HAP-1 (cell line): ENCODE measurements at regions of chr12 and their contacts with region 1.

Region 1: GRCh38 chr12:92570056-92570753 is 132.6 kb upstream of the PLEKHG7 start:
- DNase-seq: peak; percentile 80
- H3K4me3 ChIP-seq: no peak overlapping the region
- H3K4me1 ChIP-seq: no peaks in the 10 kb centered on the region
- H3K27me3 ChIP-seq: peaks cover 6% of the 10 kb centered on the region; the same call in 1 of the 2 replicates

Region 2: GRCh38 chr12:91382081-91382543 is 1188.1 kb before region 1 on chr12:
- in situ Hi-C with region 1: loop called (anchors 25 kb)
- DNase-seq: peak; percentile 88 to 91
- H3K4me3 ChIP-seq: peak overlapping the region; percentile 11
- H3K4me1 ChIP-seq: peaks cover 12% of the 10 kb centered on the region
- H3K27me3 ChIP-seq: no peaks in the 10 kb centered on the region

Region 3: DNA sequence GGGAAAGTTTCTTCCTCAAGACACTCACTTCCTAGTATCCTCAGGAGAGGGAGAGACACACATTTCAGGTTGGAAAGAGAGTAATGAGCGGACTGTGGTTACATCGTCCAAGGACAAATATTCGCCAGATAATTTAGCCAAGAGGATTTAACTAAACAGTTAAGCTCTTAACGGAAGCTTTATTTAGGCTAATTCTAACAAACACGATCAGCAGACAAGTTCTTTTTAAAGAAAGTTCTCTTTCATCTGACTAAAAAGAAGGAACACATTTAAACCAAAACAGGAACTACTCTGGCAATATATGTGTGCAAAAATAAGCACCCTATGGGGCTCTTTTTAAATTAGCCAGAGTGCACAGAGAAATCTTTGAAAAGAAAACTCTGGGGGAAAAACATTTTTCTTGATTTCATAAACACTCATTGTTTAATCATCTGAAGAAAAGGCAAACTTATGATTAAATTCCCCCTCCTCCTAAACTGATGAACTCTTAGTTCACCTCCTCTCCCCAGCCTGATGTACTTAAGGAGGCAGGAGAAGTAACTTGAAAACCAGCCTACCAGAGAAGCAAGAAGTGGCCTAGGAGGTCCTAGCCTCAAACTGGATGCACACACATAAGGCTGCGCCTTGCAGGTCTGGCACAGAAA is 411.3 kb before region 1 on chr12:
- in situ Hi-C with region 1: no loop called
- DNase-seq: no peak
- H3K4me3 ChIP-seq: no peak overlapping the region
- H3K4me1 ChIP-seq: no peaks in the 10 kb centered on the region
- H3K27me3 ChIP-seq: 0 out of 2 replicates have a peak, but pooled peaks cover 2% of the 10 kb centered on the region

Region 4: DNA sequence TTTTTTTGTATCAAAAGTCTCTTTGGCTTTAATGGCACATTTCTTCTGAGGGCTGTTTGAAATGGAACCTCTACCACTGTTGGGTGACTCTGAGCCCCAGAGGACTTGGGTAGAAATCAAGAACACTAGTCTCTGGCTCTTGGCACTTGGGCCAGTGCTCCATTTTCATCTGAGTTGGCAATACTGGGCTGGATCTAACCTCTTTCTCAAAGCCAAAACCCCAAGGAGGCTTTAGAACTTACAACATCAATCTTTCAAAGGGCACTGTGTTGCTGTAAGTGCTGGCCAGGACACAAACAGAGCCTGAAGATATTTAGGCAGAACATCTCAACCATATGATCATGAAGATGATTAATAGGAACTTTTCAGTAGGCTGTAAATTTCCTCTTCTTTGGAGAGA is 98.5 kb after region 1 on chr12:
- in situ Hi-C with region 1: no loop called
- DNase-seq: no peak
- H3K4me3 ChIP-seq: no peak overlapping the region
- H3K4me1 ChIP-seq: peaks cover 10% of the 10 kb centered on the region
- H3K27me3 ChIP-seq: 0 out of 2 replicates have a peak, but pooled peaks cover 4% of the 10 kb centered on the region

Region 5: DNA sequence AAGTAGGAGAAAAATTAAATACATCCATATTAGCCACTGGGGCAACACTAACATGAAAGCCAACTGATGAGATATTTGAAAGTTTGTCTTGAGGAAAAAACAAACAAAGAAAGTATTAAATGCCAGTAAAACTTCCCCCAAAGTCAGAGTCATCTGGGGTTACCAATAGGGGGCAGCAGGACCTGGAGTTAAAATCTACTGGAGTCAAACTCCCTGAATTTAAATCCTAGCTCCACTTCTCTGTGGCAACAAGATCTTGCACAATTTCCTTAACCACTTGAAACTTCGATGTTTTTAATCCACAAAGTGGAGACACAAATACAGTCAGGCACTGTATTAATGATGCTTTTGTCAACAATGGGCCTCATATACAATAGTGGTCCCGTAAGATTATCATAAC is 147.0 kb after region 1 on chr12:
- in situ Hi-C with region 1: no loop called
- DNase-seq: peak in 1 of 2 experiments; percentile 30
- H3K4me3 ChIP-seq: no peak overlapping the region
- H3K4me1 ChIP-seq: no peaks in the 10 kb centered on the region
- H3K27me3 ChIP-seq: 0 out of 2 replicates have a peak, but pooled peaks cover 3% of the 10 kb centered on the region